Activated CD4-positive, alpha-beta memory T cell treated with anti-CD3 and anti-CD28 coated beads, Interleukin-2, amount 10 ng/mL, durations not matched to agents 7 days and 5 days (primary cell): ENCODE measurements at regions of chrX and their contacts with region 1.

Region 1: DNA sequence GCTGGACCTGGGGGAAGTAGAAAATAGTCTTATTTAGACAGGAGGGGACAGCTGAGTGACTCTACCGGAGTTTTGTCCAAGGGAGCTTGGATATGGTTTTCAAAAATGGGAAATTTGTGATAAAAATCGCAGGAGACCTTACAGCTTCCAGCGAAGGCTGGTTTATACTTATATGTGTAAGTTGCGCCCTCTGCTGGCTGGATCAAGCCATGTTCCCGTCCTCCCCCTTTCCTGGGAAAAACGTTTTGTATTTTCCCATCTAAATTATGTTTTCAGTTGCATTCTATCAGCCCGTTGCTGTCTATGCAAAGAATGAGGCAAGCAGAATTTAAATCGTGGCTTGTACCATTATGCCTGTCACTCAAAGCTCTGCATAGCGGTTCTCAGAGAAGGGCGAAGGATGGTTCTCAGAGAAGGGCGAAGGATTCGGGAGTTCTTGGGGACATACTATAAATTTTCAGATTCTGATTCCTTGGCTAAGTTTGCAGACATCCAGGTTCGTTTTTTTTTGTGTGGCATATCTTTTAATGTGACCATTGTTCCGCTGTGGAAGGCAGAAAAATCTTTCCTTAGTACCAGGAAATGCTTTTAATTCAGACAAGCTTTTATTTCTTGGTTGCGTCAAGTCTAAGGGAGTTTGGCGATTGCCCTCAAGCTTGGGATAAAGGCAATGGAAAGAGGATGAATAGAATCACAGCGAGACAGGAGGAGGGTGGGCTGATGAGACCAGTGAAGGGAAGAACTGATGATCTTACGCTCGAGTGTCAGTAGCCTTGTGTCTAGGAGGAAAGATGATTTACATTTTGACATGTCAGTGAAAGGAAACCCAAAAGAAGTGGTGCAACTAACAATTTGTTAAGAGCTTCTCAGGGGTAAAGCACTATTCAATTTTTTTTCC is 128.5 kb upstream of the ARX start:
- DNase-seq: peak; percentile 22
- H3K4me3 Mint-ChIP-seq: no peak overlapping the region
- H3K27ac Mint-ChIP-seq: no peak overlapping the region
- H3K4me1 Mint-ChIP-seq: no peaks in the 10 kb centered on the region
- H3K27me3 Mint-ChIP-seq: peaks cover 7% of the 10 kb centered on the region

Region 2: GRCh38 chrX:24748202-24748843 is 396.0 kb before region 1 on chrX:
- CTCF ChIA-PET with region 1: interaction called, 10 read pairs
- POLR2A ChIA-PET with region 1: no interaction called
- DNase-seq: no peak
- H3K4me3 Mint-ChIP-seq: no peak overlapping the region
- H3K27ac Mint-ChIP-seq: no peak overlapping the region
- H3K4me1 Mint-ChIP-seq: no peaks in the 10 kb centered on the region
- H3K27me3 Mint-ChIP-seq: no peaks in the 10 kb centered on the region

Region 3: GRCh38 chrX:24838629-24839028 is 305.7 kb before region 1 on chrX:
- CTCF ChIA-PET with region 1: interaction called, 25 read pairs
- POLR2A ChIA-PET with region 1: no interaction called
- DNase-seq: no peak
- H3K4me3 Mint-ChIP-seq: no peak overlapping the region
- H3K27ac Mint-ChIP-seq: no peak overlapping the region
- H3K4me1 Mint-ChIP-seq: no peaks in the 10 kb centered on the region
- H3K27me3 Mint-ChIP-seq: no peaks in the 10 kb centered on the region